OCI-LY7 (cell line): ENCODE measurements at regions of chr7 and their contacts with region 1.

Region 1: DNA sequence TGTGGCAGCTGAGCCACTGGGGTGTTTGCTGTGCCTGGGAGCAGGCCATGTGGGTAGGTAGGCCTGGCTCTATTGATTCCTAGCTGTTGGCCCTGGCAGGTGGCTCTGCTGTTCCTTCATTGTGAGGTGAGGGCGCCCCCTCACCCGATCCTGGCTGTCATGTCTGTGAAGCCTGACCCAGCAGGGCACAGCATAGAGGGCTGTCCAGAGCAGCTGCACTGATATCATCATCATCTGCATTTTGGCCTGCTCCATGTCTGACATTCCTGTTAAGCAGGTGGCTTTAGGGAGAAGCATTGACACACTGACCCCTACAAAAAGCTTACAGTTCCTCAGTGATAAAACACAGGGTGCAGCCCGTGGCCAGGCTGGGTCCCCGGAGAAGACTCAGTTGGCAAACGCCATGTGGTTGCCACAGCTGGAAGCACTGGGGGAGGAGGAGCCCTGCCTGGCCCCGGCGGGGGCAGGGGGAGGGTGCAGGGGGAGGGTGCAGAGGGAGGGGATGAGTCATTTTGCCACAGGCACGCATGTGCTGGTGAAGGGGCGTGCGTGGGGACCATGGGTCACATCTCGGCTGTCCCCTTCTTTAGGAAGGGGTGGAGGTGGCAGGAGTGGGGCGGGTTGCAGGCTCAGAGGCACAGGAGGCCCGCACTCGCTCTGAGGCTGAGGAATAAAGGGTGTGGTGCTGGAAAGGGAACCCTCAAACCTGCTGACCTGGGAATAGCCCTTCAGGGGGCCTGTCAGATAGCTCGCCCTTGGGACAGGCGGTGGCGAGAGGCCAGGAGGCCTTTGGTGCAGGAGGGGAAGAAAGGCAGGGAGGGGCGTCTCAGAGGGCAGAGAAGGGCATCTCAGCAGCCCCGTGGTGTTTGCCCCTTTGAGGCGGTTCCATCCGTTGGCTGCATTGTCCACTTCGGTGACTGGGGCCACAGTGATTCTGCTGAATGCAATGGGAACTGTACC is 31.6 kb downstream of the IKZF1 start:
- DNase-seq: peak; percentile 71
- H3K4me3 ChIP-seq: peak overlapping the region; percentile 6
- H3K27ac ChIP-seq: peak overlapping the region; percentile 97
- H3K4me1 ChIP-seq: peaks cover 100% of the 10 kb centered on the region
- CTCF ChIP-seq: peak; percentile 75

Region 2: GRCh38 chr7:50147951-50148808 is 187.9 kb before region 1 on chr7:
- CTCF ChIA-PET with region 1: no interaction called
- POLR2A ChIA-PET with region 1: interaction called, 39 read pairs
- intact Hi-C with region 1: loop called (anchors 1 kb)
- DNase-seq: peak; percentile 97
- H3K4me3 ChIP-seq: peak overlapping the region; percentile 52
- H3K27ac ChIP-seq: peak overlapping the region; percentile 99
- H3K4me1 ChIP-seq: peaks cover 99% of the 10 kb centered on the region
- CTCF ChIP-seq: no peak

Region 3: GRCh38 chr7:50317221-50317678 is 18.8 kb before region 1 on chr7:
- CTCF ChIA-PET with region 1: interaction called, 5 read pairs
- POLR2A ChIA-PET with region 1: interaction called, 265 read pairs
- intact Hi-C with region 1: loop called (anchors 2 kb)
- DNase-seq: no peak
- H3K4me3 ChIP-seq: peak overlapping the region; percentile 0
- H3K27ac ChIP-seq: peak overlapping the region; percentile 10
- H3K4me1 ChIP-seq: peaks cover 73% of the 10 kb centered on the region
- CTCF ChIP-seq: peak; percentile 25; the same call in 1 of the 2 replicates

Region 4: GRCh38 chr7:50369143-50370026 is 33.3 kb after region 1 on chr7:
- CTCF ChIA-PET with region 1: interaction called, 5 read pairs
- POLR2A ChIA-PET with region 1: interaction called, 8 read pairs
- intact Hi-C with region 1: loop called (anchors 2 kb)
- DNase-seq: peak; percentile 83
- H3K4me3 ChIP-seq: no peak overlapping the region
- H3K27ac ChIP-seq: peak overlapping the region; percentile 30
- H3K4me1 ChIP-seq: peaks cover 17% of the 10 kb centered on the region
- CTCF ChIP-seq: peak; percentile 100